Activated CD4-positive, alpha-beta T cell treated with anti-CD3 and anti-CD28 coated beads for 36 hours (primary cell): ENCODE measurements at regions of chr14 and their contacts with region 1.

Region 1: GRCh38 chr14:64450255-64450654 is 15.0 kb upstream of the AKAP5 start:
- DNase-seq: peak; percentile 29
- ATAC-seq: peak; percentile 70
- H3K4me3 Mint-ChIP-seq: no peak overlapping the region
- H3K27ac Mint-ChIP-seq: peak overlapping the region; percentile 73
- H3K4me1 Mint-ChIP-seq: peaks cover 19% of the 10 kb centered on the region
- H3K27me3 Mint-ChIP-seq: no peaks in the 10 kb centered on the region

Region 2: GRCh38 chr14:64465191-64465822 is 15.1 kb after region 1 on chr14 and contains the start of gene AKAP5:
- CTCF ChIA-PET with region 1: interaction called, 4 read pairs
- POLR2A ChIA-PET with region 1: interaction called, 7 read pairs
- intact Hi-C with region 1: loop called in 1 of 2 experiments (anchors 1 kb)
- DNase-seq: peak; percentile 70
- ATAC-seq: peak; percentile 79
- H3K4me3 Mint-ChIP-seq: peak within 1 kb of the TSS; percentile 74
- H3K27ac Mint-ChIP-seq: peak within 1 kb of the TSS; percentile 67
- H3K4me1 Mint-ChIP-seq: peaks cover 42% of the 10 kb centered on the region
- H3K27me3 Mint-ChIP-seq: no peaks in the 10 kb centered on the region
- total RNA-seq, gene AKAP5: 0.39 to 0.43 TPM